ENCODE measurements at regions of chr5 and their contacts with region 1.

Region 1: DNA sequence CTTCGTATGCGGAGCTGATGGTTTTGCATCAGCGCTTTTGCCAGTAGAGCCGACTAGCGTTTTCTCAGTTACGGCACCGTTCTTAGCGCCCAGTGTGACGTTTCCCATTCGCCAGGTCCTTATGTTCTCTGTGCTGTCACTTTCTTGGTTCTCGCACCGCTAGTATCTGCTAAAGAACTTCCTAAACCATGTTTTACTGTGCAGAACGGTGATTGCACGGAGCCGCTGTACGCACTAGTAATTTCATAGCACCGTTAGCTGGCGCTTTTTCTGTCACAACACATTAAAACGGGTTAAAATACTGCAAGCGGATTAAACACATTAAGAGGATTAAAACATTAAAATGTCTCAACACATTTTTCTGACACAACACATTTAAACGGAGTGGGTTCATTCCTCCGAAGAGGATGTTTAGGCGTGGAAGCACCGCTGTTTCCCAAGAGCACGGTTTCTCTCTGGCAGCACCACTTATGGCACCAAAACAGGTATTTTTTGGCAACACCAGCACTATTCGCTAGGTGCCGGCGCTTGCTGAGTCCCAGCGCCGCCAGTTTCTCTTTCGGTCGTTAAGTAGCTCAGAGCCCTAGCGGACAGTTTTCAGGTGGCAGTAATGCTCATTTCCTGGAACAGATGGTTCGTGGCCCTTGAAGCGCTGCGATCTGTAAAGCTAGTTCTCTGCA is 20.4 kb downstream of the ANXA2R start:
- DNase-seq: peak; percentile 73 to 97 (median 84)
- ATAC-seq: peak; percentile 61
- H3K4me3 ChIP-seq: peak overlapping the region; percentile 80
- H3K4me3 Mint-ChIP-seq: peak overlapping the region; percentile 99
- H3K27ac ChIP-seq: peak overlapping the region; percentile 98
- H3K27ac Mint-ChIP-seq: peak overlapping the region; percentile 100
- H3K4me1 ChIP-seq: peaks cover 42% of the 10 kb centered on the region
- H3K4me1 Mint-ChIP-seq: peaks cover 57% of the 10 kb centered on the region
- H3K27me3 ChIP-seq: no peaks in the 10 kb centered on the region
- H3K27me3 Mint-ChIP-seq: no peaks in the 10 kb centered on the region
- CTCF ChIP-seq: peak; percentile 69

Region 2: GRCh38 chr5:41903892-41904799 is 1115.6 kb before region 1 on chr5 and contains the start of gene RIMOC1:
- CTCF ChIA-PET with region 1: no interaction called
- POLR2A ChIA-PET with region 1: interaction called, 18 read pairs
- intact Hi-C with region 1: no loop called
- DNase-seq: peak; percentile 93 to 99 (median 96)
- ATAC-seq: peak; percentile 85
- H3K4me3 ChIP-seq: peak within 1 kb of the TSS; percentile 86
- H3K4me3 Mint-ChIP-seq: peak within 1 kb of the TSS; percentile 98
- H3K27ac ChIP-seq: peak within 1 kb of the TSS; percentile 89 to 90
- H3K27ac Mint-ChIP-seq: peak within 1 kb of the TSS; percentile 99
- H3K4me1 ChIP-seq: peaks cover 20% of the 10 kb centered on the region
- H3K4me1 Mint-ChIP-seq: peaks cover 46% of the 10 kb centered on the region
- H3K27me3 ChIP-seq: no peaks in the 10 kb centered on the region
- H3K27me3 Mint-ChIP-seq: no peaks in the 10 kb centered on the region
- CTCF ChIP-seq: no peak
- total RNA-seq, gene RIMOC1: 9.3 to 10.3 TPM

Region 3: DNA sequence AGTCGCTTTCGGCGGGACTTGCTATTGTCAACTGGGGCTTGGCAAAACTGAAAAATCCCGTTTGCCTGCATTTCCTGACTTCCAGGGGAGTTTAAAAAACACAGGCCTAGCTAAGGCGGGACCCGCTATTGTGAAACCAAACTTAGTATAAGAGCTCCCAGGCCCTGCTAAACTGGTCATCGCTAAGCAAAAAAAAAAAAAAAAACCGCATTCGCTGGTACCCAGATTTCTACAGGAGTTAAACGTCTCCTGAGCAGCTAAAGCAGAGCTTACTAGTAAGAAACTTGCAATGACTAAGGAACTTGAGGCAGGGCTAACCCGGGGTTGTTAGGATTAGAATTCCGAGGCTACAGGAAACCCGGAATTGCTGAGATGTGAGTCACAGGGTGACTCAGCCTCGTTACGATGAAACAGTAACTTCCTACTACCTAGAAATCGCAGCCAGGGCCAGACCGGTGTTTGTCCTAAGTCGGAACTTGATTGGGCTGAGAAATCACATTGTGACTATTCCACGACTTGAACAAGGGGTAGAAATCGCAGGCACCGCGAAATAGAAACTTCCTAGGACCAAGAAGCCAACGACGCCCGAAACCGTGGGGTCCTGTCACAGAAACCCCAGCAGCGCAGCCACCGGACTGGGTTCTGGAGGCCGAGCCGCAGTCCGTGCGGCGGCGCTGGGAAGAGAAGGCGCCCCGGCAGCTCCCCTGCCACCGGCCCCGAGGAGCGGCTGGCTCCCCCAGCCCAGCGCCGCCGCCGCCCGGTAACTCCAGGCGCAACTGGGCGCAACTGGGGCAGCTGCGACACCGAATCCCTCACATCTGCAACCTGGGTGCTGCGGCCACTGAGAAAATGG is 69.1 kb before region 1 on chr5:
- CTCF ChIA-PET with region 1: interaction called, 26 read pairs
- POLR2A ChIA-PET with region 1: interaction called, 241 read pairs
- intact Hi-C with region 1: loop called (anchors 2 kb)
- DNase-seq: peak; percentile 35 to 90 (median 61)
- ATAC-seq: peak; percentile 41
- H3K4me3 ChIP-seq: peak overlapping the region; percentile 75
- H3K4me3 Mint-ChIP-seq: peak overlapping the region; percentile 98
- H3K27ac ChIP-seq: peak overlapping the region; percentile 96 to 98
- H3K27ac Mint-ChIP-seq: peak overlapping the region; percentile 99
- H3K4me1 ChIP-seq: peaks cover 45% of the 10 kb centered on the region
- H3K4me1 Mint-ChIP-seq: peaks cover 30% of the 10 kb centered on the region
- H3K27me3 ChIP-seq: no peaks in the 10 kb centered on the region
- H3K27me3 Mint-ChIP-seq: no peaks in the 10 kb centered on the region
- CTCF ChIP-seq: no peak

Region 4: DNA sequence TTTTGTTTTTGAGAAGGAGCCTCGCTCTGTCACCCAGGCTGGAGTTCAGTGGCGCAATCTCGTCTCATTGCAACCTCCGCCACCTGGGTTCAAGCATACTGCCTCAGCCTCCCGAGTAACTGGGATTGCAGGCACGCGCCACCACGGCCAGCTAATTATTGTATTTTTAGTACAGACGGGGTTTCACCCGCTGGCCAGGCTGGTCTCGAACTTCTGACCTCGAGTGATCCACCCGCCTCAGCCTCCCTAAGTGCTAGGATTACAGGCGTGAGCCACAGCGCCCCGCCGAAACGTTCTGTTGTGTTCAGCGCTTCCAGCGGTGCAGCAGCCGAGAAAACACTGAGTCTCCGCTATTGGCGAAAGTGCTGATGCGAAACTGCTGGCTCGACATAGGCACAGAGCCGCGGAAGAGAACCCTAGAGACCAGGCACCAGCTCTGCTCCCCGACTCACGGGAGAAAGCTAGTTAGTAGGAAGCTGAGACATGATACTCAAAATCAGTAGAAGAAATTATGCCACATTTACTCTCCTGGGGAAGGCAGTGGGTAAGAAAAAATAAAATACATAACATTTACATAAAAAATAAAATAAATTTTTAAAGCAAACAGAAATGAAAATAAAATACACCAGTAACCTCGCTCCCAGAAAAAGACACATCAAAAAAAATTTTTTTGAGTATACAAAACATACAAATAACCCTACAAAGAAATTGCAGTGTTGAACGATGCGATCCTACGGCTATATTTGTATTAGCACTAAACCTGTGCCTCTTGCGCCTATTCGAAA is 11.2 kb before region 1 on chr5:
- CTCF ChIA-PET with region 1: interaction called, 46 read pairs
- POLR2A ChIA-PET with region 1: interaction called, 1,066 read pairs
- intact Hi-C with region 1: loop called (anchors 1 kb)
- DNase-seq: peak; percentile 87 to 97 (median 92)
- ATAC-seq: peak; percentile 63
- H3K4me3 ChIP-seq: peak overlapping the region; percentile 82
- H3K4me3 Mint-ChIP-seq: peak overlapping the region; percentile 92
- H3K27ac ChIP-seq: peak overlapping the region; percentile 91 to 95
- H3K27ac Mint-ChIP-seq: peak overlapping the region; percentile 95
- H3K4me1 ChIP-seq: peaks cover 36% of the 10 kb centered on the region
- H3K4me1 Mint-ChIP-seq: peaks cover 42% of the 10 kb centered on the region
- H3K27me3 ChIP-seq: no peaks in the 10 kb centered on the region
- H3K27me3 Mint-ChIP-seq: no peaks in the 10 kb centered on the region
- CTCF ChIP-seq: no peak

Region 5: GRCh38 chr5:43034591-43034968 is 14.8 kb after region 1 on chr5:
- CTCF ChIA-PET with region 1: interaction called, 179 read pairs
- POLR2A ChIA-PET with region 1: interaction called, 1,378 read pairs
- intact Hi-C with region 1: loop called in 1 of 2 experiments (anchors 2 kb)
- DNase-seq: peak in 5 of 14 experiments; percentile 16 to 50 (median 42)
- ATAC-seq: no peak
- H3K4me3 ChIP-seq: no peak overlapping the region
- H3K4me3 Mint-ChIP-seq: peak overlapping the region; percentile 43
- H3K27ac ChIP-seq: no peak overlapping the region
- H3K27ac Mint-ChIP-seq: peak overlapping the region; percentile 98
- H3K4me1 ChIP-seq: peaks cover 41% of the 10 kb centered on the region
- H3K4me1 Mint-ChIP-seq: peaks cover 38% of the 10 kb centered on the region
- H3K27me3 ChIP-seq: no peaks in the 10 kb centered on the region
- H3K27me3 Mint-ChIP-seq: no peaks in the 10 kb centered on the region
- CTCF ChIP-seq: no peak

Region 6: GRCh38 chr5:43049236-43049635 is 29.5 kb after region 1 on chr5:
- CTCF ChIA-PET with region 1: interaction called, 4 read pairs
- POLR2A ChIA-PET with region 1: interaction called, 1,378 read pairs
- intact Hi-C with region 1: no loop called
- DNase-seq: no peak
- ATAC-seq: no peak
- H3K4me3 ChIP-seq: no peak overlapping the region
- H3K4me3 Mint-ChIP-seq: no peak overlapping the region
- H3K27ac ChIP-seq: no peak overlapping the region
- H3K27ac Mint-ChIP-seq: peak overlapping the region; percentile 41
- H3K4me1 ChIP-seq: peaks cover 14% of the 10 kb centered on the region
- H3K4me1 Mint-ChIP-seq: peaks cover 46% of the 10 kb centered on the region
- H3K27me3 ChIP-seq: no peaks in the 10 kb centered on the region
- H3K27me3 Mint-ChIP-seq: no peaks in the 10 kb centered on the region
- CTCF ChIP-seq: no peak

Measured in CD4-positive, alpha-beta T cell (primary cell).